Dorsolateral prefrontal cortex (tissue), 120 donors: ENCODE measurements at regions of chr5 and their contacts with region 1.

Region 1: GRCh38 chr5:88140856-88141752 is 127.5 kb downstream of the TMEM161B start:
- DNase-seq: peak; percentile 98 to 100 (median 100)
- H3K4me3 ChIP-seq: peak overlapping the region; percentile 45 to 88 (median 73)
- H3K27ac ChIP-seq: peak overlapping the region; percentile 92 to 100 (median 98)
- H3K27me3 ChIP-seq: no peaks in the 10 kb centered on the region
- CTCF ChIP-seq: peak; percentile 67 to 94 (median 81)

Region 2: GRCh38 chr5:87780831-87781760 is 360.0 kb before region 1 on chr5:
- intact Hi-C with region 1: loop called (anchors 2 to 5 kb)
- DNase-seq: peak; percentile 59 to 93 (median 88)
- H3K4me3 ChIP-seq: peak overlapping the region in 50 of 59 donors; percentile 1 to 47 (median 25)
- H3K27ac ChIP-seq: peak overlapping the region in 58 of 59 donors; percentile 25 to 94 (median 82)
- H3K27me3 ChIP-seq: no peaks in the 10 kb centered on the region
- CTCF ChIP-seq: peak; percentile 85 to 99 (median 96)

Region 3: GRCh38 chr5:87944553-87945285 is 196.4 kb before region 1 on chr5:
- intact Hi-C with region 1: loop called in 1 of 2 experiments (anchors 2 kb)
- DNase-seq: peak; percentile 73 to 96 (median 90)
- H3K4me3 ChIP-seq: peak overlapping the region in 4 of 59 donors; percentile 4 to 17 (median 7)
- H3K27ac ChIP-seq: peak overlapping the region in 55 of 59 donors; percentile 7 to 86 (median 68)
- H3K27me3 ChIP-seq: no peaks in the 10 kb centered on the region
- CTCF ChIP-seq: peak in 14 of 56 donors; percentile 4 to 36 (median 18)

Region 4: DNA sequence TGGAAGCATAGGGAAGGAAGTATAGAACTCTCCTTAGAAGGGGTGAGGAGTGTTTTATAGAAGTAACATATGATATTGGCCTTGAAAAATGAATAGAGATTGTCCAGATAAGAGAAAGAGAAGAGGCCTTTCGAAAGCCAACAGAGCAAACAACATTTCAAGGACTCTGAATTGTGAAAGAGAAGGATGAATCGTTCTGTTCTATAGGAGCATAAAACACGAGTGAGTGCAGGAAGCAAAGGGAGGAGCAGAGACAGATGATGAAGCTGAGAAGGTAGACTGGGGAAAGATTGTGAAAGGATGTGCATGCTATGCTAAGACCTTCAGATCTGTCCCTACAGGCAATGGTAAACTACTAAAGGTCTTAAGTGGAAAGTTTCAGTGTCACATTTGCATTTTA is 143.4 kb before region 1 on chr5:
- intact Hi-C with region 1: no loop called
- DNase-seq: no peak
- H3K4me3 ChIP-seq: no peak overlapping the region
- H3K27ac ChIP-seq: no peak overlapping the region
- H3K27me3 ChIP-seq: no peaks in the 10 kb centered on the region
- CTCF ChIP-seq: no peak

Region 5: GRCh38 chr5:88045931-88046461 is 95.1 kb before region 1 on chr5:
- intact Hi-C with region 1: loop called in 1 of 2 experiments (anchors 5 kb)
- DNase-seq: peak in 3 of 10 donors; percentile 9 to 50 (median 32)
- H3K4me3 ChIP-seq: peak overlapping the region in 2 of 59 donors; percentile 5 to 9
- H3K27ac ChIP-seq: peak overlapping the region in 55 of 59 donors; percentile 6 to 87 (median 74)
- H3K27me3 ChIP-seq: no peaks in the 10 kb centered on the region
- CTCF ChIP-seq: no peak

Region 6: DNA sequence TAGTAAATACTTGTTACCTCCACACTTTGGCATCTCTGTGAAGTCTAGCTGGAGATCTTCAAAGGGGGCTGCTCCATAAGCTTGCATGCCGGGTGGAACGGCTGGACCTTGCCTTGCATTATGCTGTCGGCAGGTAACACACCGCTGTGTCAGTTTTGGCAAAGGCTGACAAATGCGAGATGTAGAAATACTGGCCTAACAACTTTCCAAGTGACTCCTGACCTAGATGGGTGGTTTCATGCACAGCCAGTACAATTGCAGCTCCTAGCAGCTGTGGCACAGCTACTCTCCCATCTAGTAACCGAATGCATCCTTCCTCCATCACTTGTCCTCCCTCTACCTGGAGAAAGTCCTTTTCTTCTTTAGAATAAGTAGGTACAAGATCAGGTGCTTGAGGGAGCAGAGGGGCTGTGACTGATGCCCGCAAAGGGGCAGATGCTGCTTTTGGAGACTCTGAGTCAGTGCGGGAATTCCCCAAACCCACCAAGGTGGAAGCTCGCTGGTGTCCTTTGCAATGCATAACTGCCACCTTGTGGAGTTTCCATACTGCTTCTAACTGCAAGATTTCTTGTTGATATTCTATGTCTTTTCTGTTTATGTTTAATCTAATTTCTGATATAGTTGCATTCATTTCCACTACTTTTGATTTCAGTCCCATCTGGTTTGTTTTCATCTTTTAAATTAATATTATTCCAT is 49.2 kb after region 1 on chr5:
- intact Hi-C with region 1: loop called (anchors 2 to 5 kb)
- DNase-seq: peak in 5 of 10 donors; percentile 14 to 43 (median 32)
- H3K4me3 ChIP-seq: peak overlapping the region in 55 of 59 donors; percentile 5 to 58 (median 38)
- H3K27ac ChIP-seq: peak overlapping the region in 26 of 59 donors; percentile 5 to 77 (median 37)
- H3K27me3 ChIP-seq: no peaks in the 10 kb centered on the region
- CTCF ChIP-seq: peak in 55 of 56 donors; percentile 43 to 85 (median 66)

Region 7: DNA sequence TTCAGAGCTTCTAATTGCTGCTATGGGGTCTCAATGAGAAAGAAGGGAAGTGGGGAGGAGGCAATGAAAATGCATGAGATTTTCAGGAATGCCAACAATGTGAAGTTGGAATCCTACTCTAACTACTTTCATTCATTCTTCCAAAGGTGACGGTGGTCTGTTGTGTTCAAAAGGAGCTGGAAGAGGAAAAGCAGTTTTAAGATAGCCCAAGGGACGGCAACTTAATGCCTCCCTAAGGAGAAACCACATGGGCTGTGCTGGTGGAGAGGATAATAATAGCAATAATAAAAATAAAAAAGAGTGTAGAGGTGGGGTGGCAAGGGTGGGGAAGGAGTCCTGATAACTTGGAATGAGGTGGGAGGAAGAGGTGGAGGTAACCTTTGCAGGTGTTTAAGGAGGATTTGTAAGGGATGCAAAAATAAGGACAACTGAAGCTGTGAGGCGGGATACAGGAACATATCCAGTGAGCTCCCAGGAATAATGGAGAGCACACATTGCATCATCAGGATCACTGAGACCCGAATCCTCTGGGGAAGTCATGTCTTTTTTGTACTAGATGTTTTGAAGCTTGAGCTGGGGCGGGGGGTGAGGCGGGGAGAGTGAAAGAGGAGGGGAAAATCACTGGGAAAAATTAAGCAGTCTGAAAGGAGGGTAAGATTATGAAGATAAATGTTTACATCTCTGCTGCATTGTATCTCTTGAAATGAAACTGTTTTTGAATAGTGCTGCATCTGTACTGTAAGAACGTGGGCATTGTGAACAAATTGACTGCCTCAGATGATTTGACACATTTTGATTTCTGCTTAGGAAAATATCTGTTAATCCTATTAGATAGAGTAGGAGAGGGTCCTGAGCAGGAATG is 247.6 kb after region 1 on chr5:
- intact Hi-C with region 1: loop called in 1 of 2 experiments (anchors 10 kb)
- DNase-seq: no peak
- H3K4me3 ChIP-seq: peak overlapping the region in 55 of 59 donors; percentile 7 to 66 (median 38)
- H3K27ac ChIP-seq: peak overlapping the region; percentile 68 to 99 (median 96)
- H3K27me3 ChIP-seq: no peaks in the 10 kb centered on the region
- CTCF ChIP-seq: no peak

Region 8: GRCh38 chr5:88680253-88681132 is 539.4 kb after region 1 on chr5:
- intact Hi-C with region 1: loop called (anchors 2 kb)
- DNase-seq: peak; percentile 68 to 92 (median 84)
- H3K4me3 ChIP-seq: peak overlapping the region; percentile 53 to 93 (median 80)
- H3K27ac ChIP-seq: peak overlapping the region; percentile 91 to 100 (median 99)
- H3K27me3 ChIP-seq: peaks cover 0 to 27% (median 0%) of the 10 kb centered on the region in 45 donors
- CTCF ChIP-seq: peak in 55 of 56 donors; percentile 77 to 100 (median 96)